Activated B cell treated with CpG ODN at 0.5 μM for 24 hours (primary cell): ENCODE measurements at regions of chr11 and their contacts with region 1.

Region 1: GRCh38 chr11:134139873-134140331 is 71.0 kb downstream of the JAM3 start:
- DNase-seq: no peak
- ATAC-seq: peak; percentile 80
- H3K4me3 Mint-ChIP-seq: no peak overlapping the region
- H3K27ac Mint-ChIP-seq: no peak overlapping the region
- H3K4me1 Mint-ChIP-seq: no peaks in the 10 kb centered on the region
- H3K27me3 Mint-ChIP-seq: no peaks in the 10 kb centered on the region
- CTCF ChIP-seq: no peak

Region 2: GRCh38 chr11:133927690-133928627 is 211.9 kb before region 1 on chr11:
- CTCF ChIA-PET with region 1: interaction called, 9 read pairs
- POLR2A ChIA-PET with region 1: no interaction called
- intact Hi-C with region 1: loop called (anchors 1 kb)
- DNase-seq: no peak
- ATAC-seq: peak; percentile 73
- H3K4me3 Mint-ChIP-seq: no peak overlapping the region
- H3K27ac Mint-ChIP-seq: no peak overlapping the region
- H3K4me1 Mint-ChIP-seq: peaks cover 2% of the 10 kb centered on the region
- H3K27me3 Mint-ChIP-seq: peaks cover 10% of the 10 kb centered on the region
- CTCF ChIP-seq: no peak